Mammary epithelial cell (primary cell): ENCODE measurements at regions of chr4 and their contacts with region 1.

Region 1: DNA sequence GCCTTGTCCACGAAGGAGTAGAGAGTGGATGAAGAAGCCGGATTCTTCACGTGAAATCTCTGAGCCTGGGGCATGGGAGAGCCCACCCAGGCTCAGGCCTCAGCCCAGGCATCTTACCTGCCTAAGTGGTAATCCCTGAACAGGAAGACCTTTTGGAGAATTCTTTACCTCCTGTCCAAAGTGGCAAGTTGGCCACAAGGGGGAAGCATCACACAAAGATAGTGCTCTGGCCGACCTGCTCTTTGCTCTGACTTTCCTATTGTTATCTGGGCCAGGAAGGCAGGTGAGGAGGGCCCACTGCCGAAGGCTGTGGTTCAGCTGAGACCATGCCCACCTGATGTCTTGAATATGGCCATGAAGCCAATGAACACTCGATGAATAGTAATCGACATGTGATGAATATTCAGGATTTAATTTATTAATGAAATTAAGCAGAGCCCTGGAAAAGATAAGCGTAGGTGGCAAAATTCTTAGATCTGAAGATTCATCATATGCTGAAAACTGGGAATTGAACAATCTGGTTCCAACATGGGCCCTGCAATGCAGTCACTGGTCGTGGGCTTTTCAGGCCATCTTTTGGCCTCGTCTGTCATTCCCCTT is 93.8 kb downstream of the PDGFRA start:
- DNase-seq: peak; percentile 57
- H3K4me3 ChIP-seq: no peak overlapping the region
- H3K27ac ChIP-seq: no peak overlapping the region
- H3K4me1 ChIP-seq: no peaks in the 10 kb centered on the region
- H3K27me3 ChIP-seq: no peaks in the 10 kb centered on the region
- CTCF ChIP-seq: peak; percentile 57 to 83

Region 2: DNA sequence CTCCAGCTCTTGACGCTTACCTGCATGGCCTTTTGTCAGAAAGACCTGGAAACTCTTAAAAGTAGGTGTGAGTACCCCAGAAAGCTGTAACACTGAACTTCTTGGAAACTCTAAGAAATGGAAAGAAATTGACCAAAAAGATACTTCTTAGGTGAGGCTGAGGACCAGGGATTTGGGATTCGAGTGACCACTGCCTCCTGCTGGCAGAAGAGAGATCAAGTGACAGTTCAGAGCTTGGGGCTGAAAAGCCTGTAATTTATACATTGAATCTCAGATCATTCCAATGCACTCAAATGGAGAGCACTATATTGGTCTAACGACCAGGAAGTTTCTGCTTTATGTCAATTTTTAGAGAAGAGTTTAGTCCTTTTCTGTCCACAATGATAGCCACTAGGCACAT is 110.8 kb after region 1 on chr4:
- CTCF ChIA-PET with region 1: no interaction called
- dilution Hi-C with region 1: no loop called
- in situ Hi-C with region 1: loop called (anchors 5 to 10 kb)
- intact Hi-C with region 1: loop called (anchors 2 kb)
- DNase-seq: peak; percentile 1
- H3K4me3 ChIP-seq: no peak overlapping the region
- H3K27ac ChIP-seq: no peak overlapping the region
- H3K4me1 ChIP-seq: no peaks in the 10 kb centered on the region
- H3K27me3 ChIP-seq: peaks cover 4% of the 10 kb centered on the region
- CTCF ChIP-seq: peak; percentile 55 to 60

Region 3: GRCh38 chr4:54683616-54684346 is 360.9 kb after region 1 on chr4:
- CTCF ChIA-PET with region 1: no interaction called
- dilution Hi-C with region 1: no loop called
- in situ Hi-C with region 1: no loop called
- intact Hi-C with region 1: loop called (anchors 1 kb)
- DNase-seq: peak; percentile 56
- H3K4me3 ChIP-seq: no peak overlapping the region
- H3K27ac ChIP-seq: no peak overlapping the region
- H3K4me1 ChIP-seq: no peaks in the 10 kb centered on the region
- H3K27me3 ChIP-seq: peaks cover 3% of the 10 kb centered on the region
- CTCF ChIP-seq: peak; percentile 61 to 83

Region 4: DNA sequence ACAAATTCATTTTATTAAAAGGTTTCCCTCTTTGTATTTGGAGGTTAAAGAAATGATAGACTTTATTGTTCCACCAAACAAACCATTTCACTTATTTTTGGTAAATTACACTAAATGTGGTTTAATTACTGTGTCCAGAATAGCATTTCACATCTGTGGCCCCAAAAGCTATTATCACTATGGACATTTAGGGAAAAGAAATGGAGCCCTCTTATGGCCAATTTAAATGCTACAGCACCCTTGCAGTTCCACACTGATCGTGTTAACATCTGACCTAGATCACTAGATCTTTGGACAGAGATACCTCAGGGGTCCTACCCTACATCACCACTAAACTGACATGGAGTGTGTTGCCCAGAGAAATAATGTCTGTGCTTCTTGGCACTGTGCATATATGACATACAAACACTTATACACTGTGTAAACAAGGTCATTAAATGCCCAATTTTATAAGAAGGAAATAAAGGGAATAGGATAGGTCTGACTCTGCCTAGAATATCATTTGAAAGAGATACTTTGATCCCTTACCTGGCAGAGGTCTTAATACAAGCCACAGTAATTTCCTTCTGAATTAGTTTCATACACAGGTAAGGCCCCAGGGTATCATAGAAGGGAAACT is 638.5 kb after region 1 on chr4:
- CTCF ChIA-PET with region 1: no interaction called
- dilution Hi-C with region 1: no loop called
- in situ Hi-C with region 1: loop called (anchors 10 to 25 kb)
- intact Hi-C with region 1: loop called (anchors 1 kb)
- DNase-seq: peak; percentile 14
- H3K4me3 ChIP-seq: no peak overlapping the region
- H3K27ac ChIP-seq: no peak overlapping the region
- H3K4me1 ChIP-seq: no peaks in the 10 kb centered on the region
- H3K27me3 ChIP-seq: peaks cover 2% of the 10 kb centered on the region
- CTCF ChIP-seq: peak; percentile 68 to 74